ENCODE measurements at regions of chr2 and their contacts with region 1.

Region 1: GRCh38 chr2:29309090-29310029 is 194.1 kb downstream of the CLIP4 start:
- DNase-seq: peak; percentile 71
- CTCF ChIP-seq: peak; percentile 80

Region 2: DNA sequence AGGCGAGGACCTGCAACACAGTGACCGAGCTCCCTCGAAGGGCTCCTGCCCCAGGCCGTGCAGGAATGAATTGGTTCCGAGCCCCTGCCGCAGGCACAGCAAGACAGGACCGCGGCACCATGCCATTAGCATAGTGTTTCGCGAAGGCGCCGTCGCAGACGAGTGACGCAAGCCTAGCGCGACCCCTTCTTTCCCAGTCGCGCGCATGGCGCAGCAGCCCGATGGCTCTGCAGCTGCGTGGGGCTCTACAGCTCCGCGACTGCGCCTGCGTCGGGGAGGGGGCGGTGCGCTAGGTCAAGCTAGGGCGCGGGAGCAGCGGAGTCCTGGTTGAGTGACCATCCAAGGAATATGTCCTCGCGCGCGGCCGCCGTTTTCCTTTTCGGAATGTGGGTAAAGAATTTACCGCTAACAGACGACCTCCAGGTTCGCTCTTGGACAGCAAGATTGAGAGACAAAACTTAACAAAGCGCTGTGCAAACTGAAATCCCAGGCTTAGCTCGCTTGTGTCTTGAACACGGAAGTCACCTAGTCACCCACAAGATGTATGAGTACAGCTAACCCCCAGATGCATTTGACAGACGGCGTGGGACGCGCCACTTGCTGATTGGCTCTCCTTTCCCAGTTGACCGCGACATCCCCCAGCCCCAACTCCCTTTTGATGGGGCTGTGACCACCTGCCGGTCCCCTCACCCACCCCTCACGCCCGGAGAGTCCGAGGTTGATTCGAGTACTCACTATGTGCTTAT is 439.0 kb before region 1 on chr2 and contains the start of gene TRMT61B:
- CTCF ChIA-PET with region 1: no interaction called
- POLR2A ChIA-PET with region 1: no interaction called
- DNase-seq: peak; percentile 98
- CTCF ChIP-seq: no peak

Region 3: GRCh38 chr2:29223851-29224694 is 85.3 kb before region 1 on chr2:
- CTCF ChIA-PET with region 1: no interaction called
- POLR2A ChIA-PET with region 1: no interaction called
- DNase-seq: no peak
- CTCF ChIP-seq: no peak

Region 4: DNA sequence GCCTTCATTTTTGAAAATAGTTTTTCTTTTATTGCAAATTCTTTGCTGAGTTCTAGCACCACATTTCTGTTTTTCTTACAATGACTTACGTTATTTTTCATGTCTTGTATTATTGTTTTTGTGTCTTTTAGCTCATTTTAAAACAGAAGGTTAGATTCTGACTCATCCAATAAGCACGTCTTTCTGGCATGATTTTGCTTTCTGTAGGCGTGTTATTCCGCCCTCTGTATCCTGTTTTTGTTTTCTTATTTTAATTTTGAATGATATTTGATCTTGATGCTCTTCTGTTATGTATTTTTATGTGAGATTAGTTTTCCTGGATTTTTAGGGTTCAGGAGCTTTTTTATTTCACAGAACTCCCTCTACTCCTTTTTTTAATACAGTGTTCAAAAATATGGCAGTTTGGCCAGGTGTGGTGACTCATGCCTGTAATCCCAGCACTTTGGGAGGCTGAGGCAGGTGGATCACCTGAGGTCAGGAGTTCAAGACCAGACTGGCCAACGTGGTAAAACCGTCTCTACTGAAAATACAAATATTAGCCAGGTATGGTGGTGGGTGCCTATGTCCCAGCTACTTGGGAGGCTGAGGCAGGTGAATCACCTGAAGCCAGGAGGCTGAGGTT is 49.1 kb before region 1 on chr2:
- CTCF ChIA-PET with region 1: interaction called, 14 read pairs
- POLR2A ChIA-PET with region 1: no interaction called
- DNase-seq: no peak
- CTCF ChIP-seq: no peak

Region 5: GRCh38 chr2:29295857-29296256 is 13.5 kb before region 1 on chr2:
- CTCF ChIA-PET with region 1: interaction called, 23 read pairs
- POLR2A ChIA-PET with region 1: no interaction called
- DNase-seq: no peak
- CTCF ChIP-seq: peak; percentile 25

Region 6: GRCh38 chr2:29329899-29330298 is 20.5 kb after region 1 on chr2:
- CTCF ChIA-PET with region 1: interaction called, 21 read pairs
- POLR2A ChIA-PET with region 1: no interaction called
- DNase-seq: no peak
- CTCF ChIP-seq: no peak

Region 7: GRCh38 chr2:29336391-29337241 is 27.3 kb after region 1 on chr2:
- CTCF ChIA-PET with region 1: interaction called, 11 read pairs
- POLR2A ChIA-PET with region 1: no interaction called
- DNase-seq: no peak
- CTCF ChIP-seq: no peak

Region 8: DNA sequence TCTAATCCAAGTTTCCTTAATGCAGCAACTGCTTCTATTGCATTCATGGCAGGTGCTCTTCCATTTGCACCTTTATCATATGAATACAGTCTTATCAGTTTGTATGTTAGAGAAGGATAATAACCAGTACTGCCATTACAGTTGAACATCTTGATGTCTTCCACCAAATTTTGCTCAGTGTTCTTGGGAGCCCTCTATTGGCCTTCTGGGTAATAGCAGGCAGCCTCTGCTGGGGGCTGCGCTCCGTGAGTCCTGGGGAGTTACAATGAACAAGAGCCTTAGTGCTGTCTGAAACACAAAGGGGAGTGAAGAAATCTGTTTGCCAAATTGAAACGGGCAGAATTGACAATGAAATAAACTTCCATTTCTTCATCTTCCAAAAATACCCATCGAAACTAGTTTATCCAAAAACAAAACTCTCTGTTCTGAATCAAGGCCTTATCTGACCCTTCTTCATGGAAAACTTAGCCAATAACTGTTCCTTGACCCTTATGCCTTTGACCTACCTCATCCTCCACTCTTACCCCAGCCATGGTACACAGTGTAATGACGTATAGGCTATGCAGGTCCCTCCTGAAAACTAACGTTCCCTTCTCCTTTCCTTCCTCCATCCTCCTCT is 532.1 kb after region 1 on chr2:
- CTCF ChIA-PET with region 1: interaction called, 13 read pairs
- POLR2A ChIA-PET with region 1: no interaction called
- DNase-seq: peak; percentile 46
- CTCF ChIP-seq: peak; percentile 87